ENCODE measurements at regions of chr15 and their contacts with region 1.

Region 1: GRCh38 chr15:70815644-70816043 is 38.3 kb downstream of the LARP6 start:
- DNase-seq: no peak
- ATAC-seq: no peak
- H3K4me3 ChIP-seq: no peak overlapping the region
- H3K27ac ChIP-seq: no peak overlapping the region
- H3K4me1 ChIP-seq: peaks cover 12% of the 10 kb centered on the region
- H3K27me3 ChIP-seq: no peaks in the 10 kb centered on the region
- CTCF ChIP-seq: no peak

Region 2: DNA sequence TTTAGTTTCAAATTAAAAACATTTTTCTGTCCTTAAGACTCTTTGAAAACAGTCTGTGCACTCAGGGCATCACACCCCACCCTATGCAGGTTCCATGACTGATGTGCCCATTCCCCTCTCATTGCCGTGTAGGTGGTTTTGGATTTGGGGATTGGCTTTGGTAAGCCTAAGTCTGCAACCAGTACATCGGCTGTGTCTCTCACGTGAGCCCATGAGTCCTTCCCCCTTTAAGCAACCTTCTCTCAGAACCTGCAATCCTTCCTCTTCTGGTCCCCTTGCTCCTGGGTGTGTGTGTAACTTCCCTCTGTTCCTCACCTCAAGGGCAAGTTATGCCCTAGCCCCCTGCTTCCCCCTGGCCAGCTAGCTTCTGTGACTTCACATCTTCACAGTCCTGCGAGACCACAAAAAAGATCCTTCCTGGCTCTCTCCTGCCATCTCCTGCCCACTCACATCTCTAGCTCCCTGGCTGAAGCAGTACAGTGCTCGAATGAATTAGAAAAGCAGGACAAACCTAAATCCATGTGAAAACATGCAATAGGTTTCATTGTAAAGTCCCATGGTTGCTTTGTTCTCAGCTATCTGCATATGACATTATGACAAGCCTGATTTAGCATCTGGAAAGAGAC is 179.0 kb before region 1 on chr15:
- intact Hi-C with region 1: no loop called
- DNase-seq: no peak
- ATAC-seq: no peak
- H3K4me3 ChIP-seq: no peak overlapping the region
- H3K27ac ChIP-seq: no peak overlapping the region
- H3K4me1 ChIP-seq: no peaks in the 10 kb centered on the region
- H3K27me3 ChIP-seq: no peaks in the 10 kb centered on the region
- CTCF ChIP-seq: no peak

Region 3: GRCh38 chr15:70670680-70671079 is 145.0 kb before region 1 on chr15:
- intact Hi-C with region 1: loop called (anchors 10 kb)
- DNase-seq: no peak
- ATAC-seq: no peak
- H3K4me3 ChIP-seq: no peak overlapping the region
- H3K27ac ChIP-seq: no peak overlapping the region
- H3K4me1 ChIP-seq: peaks cover 23% of the 10 kb centered on the region
- H3K27me3 ChIP-seq: no peaks in the 10 kb centered on the region
- CTCF ChIP-seq: peak; percentile 11

Region 4: DNA sequence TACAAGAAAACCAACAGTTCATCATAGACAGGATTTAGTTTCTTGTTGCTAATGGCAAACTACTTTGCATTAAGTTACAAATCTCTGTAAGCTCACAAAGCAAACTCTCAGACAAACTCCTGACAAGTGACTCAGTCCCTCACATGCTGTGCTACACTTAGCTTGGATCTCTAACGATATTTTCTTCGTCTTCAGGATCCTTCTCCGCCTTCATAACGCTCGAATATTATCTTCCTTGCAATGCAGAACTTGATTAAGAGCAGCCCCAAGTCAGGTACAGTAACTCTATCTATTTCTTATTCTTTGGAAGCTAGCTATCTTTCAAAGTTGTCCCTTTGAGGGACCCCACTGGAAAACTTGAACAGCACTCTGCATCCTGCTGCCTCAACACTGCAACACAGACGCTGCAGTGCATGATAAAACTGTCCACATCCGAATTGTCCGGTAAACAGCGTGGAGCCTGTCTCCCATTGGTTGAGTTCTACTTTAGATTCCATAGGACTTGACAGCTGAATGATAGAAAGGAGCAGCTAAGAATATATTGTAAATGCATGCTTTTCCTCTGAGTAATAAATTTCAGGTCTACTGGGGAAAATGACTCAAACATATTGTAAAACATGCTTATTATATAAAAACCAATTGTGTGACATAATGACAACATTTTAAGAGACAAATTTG is 113.6 kb before region 1 on chr15:
- intact Hi-C with region 1: no loop called
- DNase-seq: no peak
- ATAC-seq: no peak
- H3K4me3 ChIP-seq: peak overlapping the region; percentile 31
- H3K27ac ChIP-seq: peak overlapping the region; percentile 1
- H3K4me1 ChIP-seq: peaks cover 15% of the 10 kb centered on the region
- H3K27me3 ChIP-seq: no peaks in the 10 kb centered on the region
- CTCF ChIP-seq: no peak

Region 5: DNA sequence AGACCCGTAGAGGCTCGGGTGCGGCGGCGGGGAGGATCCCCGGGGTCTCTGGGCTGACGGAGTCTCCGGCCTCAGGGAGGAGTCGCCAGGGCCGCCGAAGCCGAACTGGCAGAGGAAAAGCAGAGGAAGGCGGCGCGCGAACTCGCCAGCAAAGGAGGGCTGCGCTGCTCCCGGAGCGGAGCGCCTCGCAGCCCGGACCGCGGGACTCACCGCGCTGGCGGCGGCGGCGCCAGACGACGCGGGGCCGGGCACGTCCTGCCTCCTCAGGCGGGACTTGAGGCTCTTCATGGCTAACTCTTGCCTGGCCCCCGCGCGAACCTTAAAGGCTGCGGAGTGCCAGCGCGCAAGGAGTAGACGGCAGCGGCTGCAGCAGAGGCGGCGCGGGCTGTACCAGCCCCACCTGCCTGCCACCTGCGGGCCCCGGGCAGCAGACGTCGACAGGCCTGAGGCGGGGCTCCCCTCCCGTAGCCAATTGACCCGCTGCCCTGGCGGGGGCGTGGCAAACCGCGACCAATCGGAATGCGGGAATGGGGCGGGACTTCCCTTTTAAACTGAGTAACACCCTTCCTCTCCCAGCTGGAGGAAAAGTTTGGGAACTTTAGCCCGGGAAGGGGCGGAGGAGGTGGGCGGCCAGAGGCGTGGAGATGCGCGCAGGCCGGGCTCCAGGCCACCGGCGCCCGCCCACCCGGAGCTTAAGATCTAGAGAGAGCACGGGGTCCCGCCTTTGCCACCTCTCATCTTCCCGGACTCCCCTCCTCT is 52.3 kb before region 1 on chr15 and contains the start of gene UACA:
- intact Hi-C with region 1: no loop called
- DNase-seq: peak; percentile 89
- ATAC-seq: peak; percentile 97 to 98
- H3K4me3 ChIP-seq: peak within 1 kb of the TSS; percentile 79
- H3K27ac ChIP-seq: peak within 1 kb of the TSS; percentile 94
- H3K4me1 ChIP-seq: peaks cover 50% of the 10 kb centered on the region
- H3K27me3 ChIP-seq: peaks cover 19% of the 10 kb centered on the region
- CTCF ChIP-seq: peak; percentile 25
- total RNA-seq, gene UACA: 35.7 TPM

Region 6: DNA sequence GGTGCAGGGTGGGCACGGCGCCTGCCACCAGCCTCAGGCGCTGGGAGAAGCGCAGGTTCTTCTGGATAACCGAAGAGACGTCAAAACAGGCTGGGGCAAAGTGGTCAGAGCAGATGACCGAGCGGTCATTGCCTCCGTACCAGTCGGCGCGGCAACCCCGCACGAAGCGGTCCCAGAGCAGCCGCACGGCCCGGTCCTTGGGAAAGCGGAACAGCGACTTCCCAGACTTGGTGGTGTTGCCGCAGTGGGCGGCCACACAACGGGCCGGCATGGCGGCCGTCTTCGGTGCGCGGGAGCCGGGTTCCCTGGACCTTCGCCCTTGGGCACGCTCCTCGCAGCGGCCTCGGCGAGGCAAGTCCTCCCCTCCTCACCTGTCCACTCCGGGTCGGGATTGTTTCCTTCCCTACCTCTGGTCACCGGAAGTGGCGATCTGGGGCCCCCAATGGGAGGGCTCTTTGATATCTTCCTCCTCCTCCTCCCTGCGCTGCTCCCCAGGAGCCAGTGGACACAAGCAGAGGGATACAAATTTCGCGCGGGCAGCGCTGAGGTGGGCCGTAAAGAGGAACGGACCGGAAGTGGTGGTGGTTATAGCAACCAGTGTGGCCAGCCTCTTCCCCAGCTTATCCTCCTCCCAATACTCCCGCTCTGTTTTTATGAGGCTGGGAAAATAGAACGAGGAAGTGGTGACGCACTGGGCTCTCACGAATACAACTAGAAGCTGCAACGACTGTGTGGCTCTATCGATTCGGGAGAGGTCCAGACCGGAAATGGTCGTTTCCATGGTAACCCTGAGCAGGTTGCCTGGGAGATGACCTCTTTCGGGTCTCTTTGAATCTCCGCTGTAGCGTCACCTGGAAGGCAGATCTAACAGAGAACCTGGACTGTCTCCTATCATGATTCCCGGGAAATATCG is 76.6 kb after region 1 on chr15 and contains the starts of genes LRRC49 and THAP10:
- intact Hi-C with region 1: no loop called
- DNase-seq: peak; percentile 90
- ATAC-seq: peak; percentile 96 to 98
- H3K4me3 ChIP-seq: peak within 1 kb of the TSS; percentile 86
- H3K27ac ChIP-seq: peak within 1 kb of the TSS; percentile 77
- H3K4me1 ChIP-seq: peaks cover 5% of the 10 kb centered on the region
- H3K27me3 ChIP-seq: no peaks in the 10 kb centered on the region
- CTCF ChIP-seq: no peak
- total RNA-seq, gene LRRC49: 7.3 TPM
- total RNA-seq, gene THAP10: 2.4 TPM

Measured in lower lobe of right lung (tissue), 2 donors.